ENCODE measurements at regions of chr3 and their contacts with region 1.

Region 1: GRCh38 chr3:98817547-98818041 is 54.5 kb downstream of the ST3GAL6 start:
- DNase-seq: peak in 1 of 2 experiments; percentile 65
- H3K4me3 ChIP-seq: no peak overlapping the region
- H3K4me1 ChIP-seq: no peaks in the 10 kb centered on the region; the same call in 1 of the 2 replicates
- H3K27me3 ChIP-seq: no peaks in the 10 kb centered on the region

Region 2: DNA sequence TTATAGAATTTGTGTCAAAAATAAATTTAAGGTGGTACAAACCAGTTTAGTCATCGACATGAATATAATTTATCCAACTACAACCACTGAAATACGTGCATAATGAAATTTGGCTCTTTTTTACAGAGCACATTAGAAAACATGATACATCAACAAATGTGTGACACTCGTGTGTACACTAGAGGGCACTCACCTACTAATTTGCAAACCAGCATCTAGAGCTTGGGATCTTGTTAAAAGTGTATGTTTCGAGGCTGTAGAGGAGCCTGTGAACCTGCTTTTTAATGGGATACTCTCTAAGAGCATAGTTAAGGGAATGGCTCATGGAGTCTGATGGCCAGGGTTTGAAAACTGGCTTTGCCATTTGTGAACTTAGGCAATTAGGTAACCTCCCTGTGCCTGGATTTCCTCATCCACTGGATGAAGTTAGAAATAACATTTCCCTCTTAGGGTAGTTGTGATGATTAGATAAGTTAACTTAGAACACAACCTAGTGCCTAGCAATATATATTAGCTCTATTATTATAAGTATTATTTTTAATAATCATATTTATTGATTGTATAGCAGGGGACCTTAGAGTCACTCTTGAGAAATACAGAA is 215.4 kb before region 1 on chr3:
- in situ Hi-C with region 1: loop called (anchors 5 kb)
- DNase-seq: peak; percentile 39 to 72
- H3K4me3 ChIP-seq: no peak overlapping the region
- H3K4me1 ChIP-seq: no peaks in the 10 kb centered on the region
- H3K27me3 ChIP-seq: no peaks in the 10 kb centered on the region

Region 3: DNA sequence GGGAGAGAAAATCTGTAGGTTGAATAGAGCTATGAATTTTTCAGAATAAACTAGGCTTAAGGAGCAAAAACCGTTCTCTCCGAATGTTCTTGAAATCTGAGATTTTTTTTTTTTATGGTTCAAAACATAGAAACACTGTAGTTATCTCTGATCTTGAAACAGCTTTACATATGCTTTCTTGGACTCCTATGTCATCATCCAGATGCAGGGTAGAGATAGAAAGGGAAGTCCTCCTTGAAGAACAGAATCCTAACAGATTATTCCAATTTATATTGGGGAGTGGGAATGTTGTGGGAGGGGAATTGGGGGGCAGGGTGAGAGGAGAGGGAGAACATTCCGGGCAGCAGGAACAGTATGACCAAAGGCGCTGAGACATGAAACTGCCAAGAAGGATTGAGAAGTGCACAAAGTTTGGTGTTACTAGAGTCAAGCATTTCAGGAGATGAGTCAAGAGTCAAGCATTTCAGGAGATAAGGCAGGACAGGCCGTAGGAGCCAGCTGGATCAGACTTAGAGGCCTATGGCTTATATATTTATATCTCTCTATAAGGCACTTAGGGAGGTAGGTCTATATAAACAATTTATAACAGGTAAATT is 76.4 kb before region 1 on chr3:
- in situ Hi-C with region 1: no loop called
- DNase-seq: no peak
- H3K4me3 ChIP-seq: no peak overlapping the region
- H3K4me1 ChIP-seq: no peaks in the 10 kb centered on the region
- H3K27me3 ChIP-seq: no peaks in the 10 kb centered on the region

Region 4: GRCh38 chr3:98994128-98994762 is 176.7 kb after region 1 on chr3:
- in situ Hi-C with region 1: loop called (anchors 5 kb)
- DNase-seq: peak in 1 of 2 experiments; percentile 31
- H3K4me3 ChIP-seq: no peak overlapping the region
- H3K4me1 ChIP-seq: peaks cover 5% of the 10 kb centered on the region
- H3K27me3 ChIP-seq: 0 out of 2 replicates have a peak, but pooled peaks cover 6% of the 10 kb centered on the region

Region 5: GRCh38 chr3:99084826-99085225 is 267.2 kb after region 1 on chr3:
- in situ Hi-C with region 1: no loop called
- DNase-seq: no peak
- H3K4me3 ChIP-seq: no peak overlapping the region
- H3K4me1 ChIP-seq: peaks cover 9% of the 10 kb centered on the region
- H3K27me3 ChIP-seq: no peaks in the 10 kb centered on the region

Region 6: GRCh38 chr3:99172736-99173657 is 355.4 kb after region 1 on chr3:
- in situ Hi-C with region 1: loop called (anchors 10 kb)
- DNase-seq: peak; percentile 60 to 72
- H3K4me3 ChIP-seq: no peak overlapping the region
- H3K4me1 ChIP-seq: no peaks in the 10 kb centered on the region
- H3K27me3 ChIP-seq: no peaks in the 10 kb centered on the region

Region 7: GRCh38 chr3:99753268-99753975 is 935.8 kb after region 1 on chr3:
- in situ Hi-C with region 1: loop called (anchors 10 kb)
- DNase-seq: peak; percentile 48 to 66
- H3K4me3 ChIP-seq: no peak overlapping the region
- H3K4me1 ChIP-seq: no peaks in the 10 kb centered on the region; the same call in 1 of the 2 replicates
- H3K27me3 ChIP-seq: peaks cover 6% of the 10 kb centered on the region